Activated CD8-positive, alpha-beta memory T cell treated with anti-CD3 and anti-CD28 coated beads, Interleukin-2, amount 10 ng/mL, durations not matched to agents 7 days and 5 days (primary cell): ENCODE measurements at regions of chr4 and their contacts with region 1.

Region 1: GRCh38 chr4:40908702-40909362 is 159.1 kb downstream of the NSUN7 start:
- DNase-seq: peak; percentile 79
- ATAC-seq: peak; percentile 85
- H3K4me3 Mint-ChIP-seq: no peak overlapping the region
- H3K27ac Mint-ChIP-seq: no peak overlapping the region
- H3K4me1 Mint-ChIP-seq: peaks cover 13% of the 10 kb centered on the region
- H3K27me3 Mint-ChIP-seq: no peaks in the 10 kb centered on the region

Region 2: DNA sequence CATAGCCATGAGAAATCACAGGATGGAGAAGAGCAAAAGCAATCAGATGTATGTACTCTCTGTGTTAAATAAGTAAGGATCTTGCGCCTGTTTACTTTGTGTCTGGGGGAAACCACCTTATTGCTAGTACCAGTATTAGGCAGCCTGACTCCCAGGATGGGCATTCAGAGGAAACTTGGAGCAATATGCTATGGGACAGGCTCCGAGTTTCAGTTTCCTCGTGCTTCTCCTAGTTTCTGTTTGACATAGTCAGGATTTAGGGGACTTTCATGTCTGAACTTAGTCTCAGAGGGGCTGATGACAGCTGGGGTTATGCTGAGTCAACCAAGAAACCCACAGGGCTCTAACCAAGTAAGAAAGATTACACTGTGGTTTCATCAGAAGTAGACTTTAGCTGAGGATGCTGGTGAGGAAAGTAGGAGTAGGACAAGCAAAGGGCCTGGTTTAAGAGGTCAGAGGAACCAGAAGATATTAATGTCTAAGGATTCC is 145.6 kb before region 1 on chr4:
- CTCF ChIA-PET with region 1: no interaction called
- DNase-seq: peak; percentile 85
- ATAC-seq: peak; percentile 99
- H3K4me3 Mint-ChIP-seq: peak overlapping the region; percentile 43
- H3K27ac Mint-ChIP-seq: peak overlapping the region; percentile 78
- H3K4me1 Mint-ChIP-seq: peaks cover 21% of the 10 kb centered on the region
- H3K27me3 Mint-ChIP-seq: peaks cover 10% of the 10 kb centered on the region

Region 3: GRCh38 chr4:40875507-40876150 is 33.2 kb before region 1 on chr4:
- CTCF ChIA-PET with region 1: no interaction called
- DNase-seq: no peak
- ATAC-seq: no peak
- H3K4me3 Mint-ChIP-seq: no peak overlapping the region
- H3K27ac Mint-ChIP-seq: no peak overlapping the region
- H3K4me1 Mint-ChIP-seq: no peaks in the 10 kb centered on the region
- H3K27me3 Mint-ChIP-seq: peaks cover 42% of the 10 kb centered on the region

Region 4: DNA sequence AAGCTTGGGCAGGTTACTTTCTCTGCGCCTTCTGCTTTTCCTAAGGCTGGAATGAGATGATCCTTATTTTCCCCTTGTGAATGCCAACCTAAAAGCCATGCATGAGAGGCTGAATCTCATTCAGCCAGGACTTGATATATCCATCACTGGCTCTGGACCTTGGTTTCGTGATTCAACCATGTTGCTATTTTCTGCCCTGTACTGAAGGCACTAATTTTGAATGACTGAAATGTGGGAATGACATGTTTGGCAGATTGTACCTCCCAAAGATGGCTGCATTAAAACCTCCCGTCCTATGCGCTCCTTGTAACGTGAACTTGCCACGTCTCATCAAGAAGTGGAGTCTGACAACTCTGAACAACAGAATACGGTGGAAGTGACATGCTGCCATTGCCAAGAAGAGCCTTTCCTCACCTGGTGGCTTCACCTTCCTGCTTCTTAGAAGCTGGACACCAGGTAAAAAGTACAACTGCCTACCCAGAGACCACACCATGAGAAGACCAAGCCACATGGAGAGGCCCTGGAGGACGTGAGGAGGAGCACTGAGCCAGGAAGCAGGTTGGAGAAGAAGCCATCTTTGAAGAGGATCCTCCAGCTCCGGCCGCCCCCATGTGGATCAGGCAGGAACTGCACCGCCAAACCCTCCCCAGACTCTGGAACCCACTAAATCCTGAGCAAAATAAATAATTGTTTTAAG is 15.4 kb after region 1 on chr4:
- CTCF ChIA-PET with region 1: interaction called, 38 read pairs
- DNase-seq: peak; percentile 79
- ATAC-seq: peak; percentile 85
- H3K4me3 Mint-ChIP-seq: no peak overlapping the region
- H3K27ac Mint-ChIP-seq: peak overlapping the region; percentile 31
- H3K4me1 Mint-ChIP-seq: peaks cover 6% of the 10 kb centered on the region
- H3K27me3 Mint-ChIP-seq: peaks cover 13% of the 10 kb centered on the region

Region 5: GRCh38 chr4:40976343-40976742 is 67.5 kb after region 1 on chr4:
- CTCF ChIA-PET with region 1: no interaction called
- DNase-seq: no peak
- ATAC-seq: no peak
- H3K4me3 Mint-ChIP-seq: no peak overlapping the region
- H3K27ac Mint-ChIP-seq: no peak overlapping the region
- H3K4me1 Mint-ChIP-seq: no peaks in the 10 kb centered on the region
- H3K27me3 Mint-ChIP-seq: peaks cover 17% of the 10 kb centered on the region